Activated naive CD8-positive, alpha-beta T cell treated with anti-CD3 and anti-CD28 coated beads, Interleukin-2, amount 10 ng/mL, durations not matched to agents 7 days and 5 days (primary cell): ENCODE measurements at regions of chr12 and their contacts with region 1.

Region 1: GRCh38 chr12:92145731-92146496 is at the start of gene BTG1:
- DNase-seq: peak; percentile 95
- ATAC-seq: peak; percentile 77
- H3K4me3 Mint-ChIP-seq: peak within 1 kb of the TSS; percentile 88
- H3K27ac Mint-ChIP-seq: peak within 1 kb of the TSS; percentile 99
- H3K4me1 Mint-ChIP-seq: peaks cover 27% of the 10 kb centered on the region
- H3K27me3 Mint-ChIP-seq: no peaks in the 10 kb centered on the region
- total RNA-seq, gene BTG1: 249 to 255 TPM

Region 2: GRCh38 chr12:91811481-91812287 is 334.2 kb before region 1 on chr12:
- POLR2A ChIA-PET with region 1: interaction called, 23 read pairs
- DNase-seq: peak; percentile 70
- ATAC-seq: no peak
- H3K4me3 Mint-ChIP-seq: no peak overlapping the region
- H3K27ac Mint-ChIP-seq: peak overlapping the region; percentile 11
- H3K4me1 Mint-ChIP-seq: peaks cover 4% of the 10 kb centered on the region
- H3K27me3 Mint-ChIP-seq: no peaks in the 10 kb centered on the region

Region 3: DNA sequence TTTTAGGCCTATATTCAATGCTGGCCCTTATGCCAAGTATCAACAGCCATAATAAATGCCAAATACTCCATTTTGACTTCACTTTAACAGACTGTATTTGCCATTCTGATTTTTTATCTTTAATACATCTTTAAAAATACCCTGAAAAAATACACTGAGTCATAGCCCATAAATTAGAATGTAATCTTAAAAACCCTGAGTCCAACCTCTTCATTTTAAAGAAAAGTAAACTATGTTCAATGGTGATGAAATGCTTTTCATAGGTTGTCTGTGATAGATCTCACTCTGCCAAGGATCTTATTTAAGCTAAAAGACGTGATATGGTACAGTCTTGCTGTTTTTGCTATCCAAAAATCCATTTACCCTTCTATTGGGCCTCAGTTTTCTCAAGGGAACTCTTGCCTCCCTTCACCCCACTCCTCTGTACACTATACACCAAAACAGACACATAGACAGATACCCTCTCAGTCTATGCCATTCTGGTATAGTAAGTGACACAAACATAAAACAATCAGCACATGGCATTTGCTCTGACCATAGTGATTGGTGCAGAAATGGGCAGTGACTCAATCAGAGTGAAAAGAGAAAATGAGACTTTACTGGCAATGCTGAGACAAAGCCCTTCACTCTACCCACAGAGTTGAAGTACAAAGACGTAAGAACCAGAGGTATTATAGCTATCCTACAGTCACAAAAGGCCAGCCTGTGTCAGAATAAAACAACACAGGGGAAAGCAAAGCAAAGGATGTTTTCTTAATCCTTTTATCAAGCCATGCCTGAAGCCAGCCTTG is 49.4 kb before region 1 on chr12:
- POLR2A ChIA-PET with region 1: interaction called, 18 read pairs
- DNase-seq: no peak
- ATAC-seq: peak; percentile 50
- H3K4me3 Mint-ChIP-seq: peak overlapping the region; percentile 49
- H3K27ac Mint-ChIP-seq: peak overlapping the region; percentile 76
- H3K4me1 Mint-ChIP-seq: peaks cover 19% of the 10 kb centered on the region
- H3K27me3 Mint-ChIP-seq: no peaks in the 10 kb centered on the region

Region 4: GRCh38 chr12:92170050-92170449 is 24.1 kb after region 1 on chr12:
- POLR2A ChIA-PET with region 1: interaction called, 11 read pairs
- DNase-seq: no peak
- ATAC-seq: no peak
- H3K4me3 Mint-ChIP-seq: no peak overlapping the region
- H3K27ac Mint-ChIP-seq: no peak overlapping the region
- H3K4me1 Mint-ChIP-seq: peaks cover 11% of the 10 kb centered on the region
- H3K27me3 Mint-ChIP-seq: no peaks in the 10 kb centered on the region

Region 5: GRCh38 chr12:92208613-92209121 is 62.8 kb after region 1 on chr12:
- POLR2A ChIA-PET with region 1: interaction called, 148 read pairs
- DNase-seq: peak; percentile 40
- ATAC-seq: peak; percentile 84
- H3K4me3 Mint-ChIP-seq: peak overlapping the region; percentile 59
- H3K27ac Mint-ChIP-seq: peak overlapping the region; percentile 97
- H3K4me1 Mint-ChIP-seq: peaks cover 35% of the 10 kb centered on the region
- H3K27me3 Mint-ChIP-seq: no peaks in the 10 kb centered on the region

Region 6: GRCh38 chr12:92408072-92408900 is 262.4 kb after region 1 on chr12:
- POLR2A ChIA-PET with region 1: interaction called, 248 read pairs
- DNase-seq: peak; percentile 45
- ATAC-seq: peak; percentile 30
- H3K4me3 Mint-ChIP-seq: no peak overlapping the region
- H3K27ac Mint-ChIP-seq: peak overlapping the region; percentile 34
- H3K4me1 Mint-ChIP-seq: peaks cover 30% of the 10 kb centered on the region
- H3K27me3 Mint-ChIP-seq: no peaks in the 10 kb centered on the region